ENCODE measurements at regions of chr18 and their contacts with region 1.

Region 1: GRCh38 chr18:74495581-74496507 is at the start of gene CNDP2:
- DNase-seq: peak; percentile 96 to 97 (median 96)
- H3K4me3 ChIP-seq: peak within 1 kb of the TSS; percentile 61 to 82
- H3K4me3 Mint-ChIP-seq: peak within 1 kb of the TSS; percentile 94 to 99 (median 96)
- H3K27ac ChIP-seq: peak within 1 kb of the TSS; percentile 92
- H3K27ac Mint-ChIP-seq: peak within 1 kb of the TSS; percentile 90 to 99 (median 99)
- H3K4me1 ChIP-seq: peaks cover 37% of the 10 kb centered on the region
- H3K4me1 Mint-ChIP-seq: peaks cover 31 to 58% (median 41%) of the 10 kb centered on the region in 4 donors
- H3K27me3 ChIP-seq: no peaks in the 10 kb centered on the region
- H3K27me3 Mint-ChIP-seq: no peaks in the 10 kb centered on the region
- total RNA-seq, gene CNDP2: 145 to 153 TPM

Region 2: DNA sequence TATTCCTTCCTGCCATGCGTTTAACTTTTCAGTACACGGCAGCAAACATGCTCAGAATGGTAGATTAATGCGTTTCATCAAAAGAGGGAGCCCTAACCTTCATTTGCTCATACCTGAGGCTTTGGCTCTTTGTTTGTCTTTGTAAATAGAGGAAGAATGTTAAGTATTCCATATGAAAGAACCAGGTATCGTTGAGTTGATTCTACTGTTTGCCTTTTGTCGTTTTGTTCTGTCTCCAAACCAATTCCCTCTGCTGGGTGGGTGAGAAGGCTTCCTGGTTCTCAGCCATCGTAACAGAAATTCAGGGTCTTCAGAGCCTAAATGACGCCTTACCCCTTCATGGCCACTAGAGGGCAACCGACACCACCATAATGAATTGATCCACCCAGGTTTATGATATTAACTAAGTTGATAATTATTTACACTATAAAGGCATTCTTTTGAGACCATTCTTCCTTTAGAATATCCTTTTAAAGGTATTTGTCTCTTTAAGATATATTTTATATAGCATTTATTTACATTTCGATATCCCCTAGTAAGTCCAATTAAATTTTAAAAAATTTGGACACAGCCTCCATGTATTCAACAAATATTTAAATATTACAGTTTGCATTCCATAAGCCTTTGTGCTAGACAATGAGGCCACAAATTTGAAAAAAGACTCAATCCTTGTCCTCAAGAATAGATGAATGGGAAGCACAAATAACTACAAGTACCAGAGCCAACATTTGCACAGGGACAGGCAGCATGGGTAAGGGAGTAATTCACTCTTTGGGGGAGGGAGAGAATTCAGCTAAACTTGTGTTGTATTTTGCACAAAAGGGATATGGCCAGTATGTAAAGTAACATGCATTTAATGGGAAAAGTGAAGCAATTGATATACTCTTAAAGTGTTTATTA is 299.4 kb before region 1 on chr18:
- CTCF ChIA-PET with region 1: interaction called, 46 read pairs
- POLR2A ChIA-PET with region 1: no interaction called
- intact Hi-C with region 1: loop called (anchors 1 kb)
- DNase-seq: peak; percentile 57 to 78 (median 72)
- H3K4me3 ChIP-seq: no peak overlapping the region
- H3K4me3 Mint-ChIP-seq: peak overlapping the region; percentile 71 to 90 (median 81)
- H3K27ac ChIP-seq: no peak overlapping the region
- H3K27ac Mint-ChIP-seq: peak overlapping the region in 6 of 7 donors; percentile 23 to 79 (median 65)
- H3K4me1 ChIP-seq: peaks cover 5% of the 10 kb centered on the region
- H3K4me1 Mint-ChIP-seq: peaks cover 0 to 4% (median 0%) of the 10 kb centered on the region in 4 donors
- H3K27me3 ChIP-seq: no peaks in the 10 kb centered on the region
- H3K27me3 Mint-ChIP-seq: peaks cover 2 to 14% of the 10 kb centered on the region in 2 donors

Region 3: GRCh38 chr18:74342416-74343043 is 153.3 kb before region 1 on chr18:
- CTCF ChIA-PET with region 1: interaction called, 422 read pairs
- POLR2A ChIA-PET with region 1: no interaction called
- intact Hi-C with region 1: no loop called
- DNase-seq: peak; percentile 25 to 47 (median 42)
- H3K4me3 ChIP-seq: no peak overlapping the region
- H3K4me3 Mint-ChIP-seq: no peak overlapping the region
- H3K27ac ChIP-seq: no peak overlapping the region
- H3K27ac Mint-ChIP-seq: no peak overlapping the region
- H3K4me1 ChIP-seq: no peaks in the 10 kb centered on the region
- H3K4me1 Mint-ChIP-seq: no peaks in the 10 kb centered on the region
- H3K27me3 ChIP-seq: no peaks in the 10 kb centered on the region
- H3K27me3 Mint-ChIP-seq: peaks cover 3 to 4% of the 10 kb centered on the region in 2 donors

Region 4: DNA sequence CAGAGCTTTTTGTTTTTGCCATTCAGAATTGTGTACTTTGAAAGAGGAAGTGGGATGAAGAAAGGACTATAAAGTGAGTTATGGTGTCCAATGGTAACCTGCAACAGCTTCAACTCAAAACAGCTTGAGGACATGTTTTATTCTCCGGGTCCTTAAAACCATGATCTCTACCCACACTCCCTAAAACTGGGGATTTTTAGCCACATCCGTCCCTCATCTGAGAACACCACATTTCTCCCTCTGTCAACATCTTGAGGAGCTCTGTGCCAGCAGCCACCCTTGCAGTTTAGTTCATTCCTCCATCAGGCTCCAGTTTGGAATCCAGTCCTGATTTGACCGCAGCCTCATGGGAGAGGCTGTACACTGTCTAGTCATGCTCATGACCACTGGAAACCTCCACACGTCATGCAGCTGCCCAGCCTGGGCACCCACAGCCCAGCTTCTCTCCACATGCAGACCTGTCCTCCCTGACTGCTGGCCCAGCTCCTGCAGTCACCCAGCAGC is 117.6 kb before region 1 on chr18:
- CTCF ChIA-PET with region 1: interaction called, 124 read pairs
- POLR2A ChIA-PET with region 1: interaction called, 32 read pairs
- intact Hi-C with region 1: loop called (anchors 1 kb)
- DNase-seq: peak; percentile 59 to 70 (median 63)
- H3K4me3 ChIP-seq: no peak overlapping the region
- H3K4me3 Mint-ChIP-seq: peak overlapping the region in 7 of 8 donors; percentile 40 to 69 (median 61)
- H3K27ac ChIP-seq: no peak overlapping the region
- H3K27ac Mint-ChIP-seq: peak overlapping the region; percentile 49 to 95 (median 84)
- H3K4me1 ChIP-seq: peaks cover 50% of the 10 kb centered on the region
- H3K4me1 Mint-ChIP-seq: peaks cover 33 to 59% (median 45%) of the 10 kb centered on the region in 4 donors
- H3K27me3 ChIP-seq: no peaks in the 10 kb centered on the region
- H3K27me3 Mint-ChIP-seq: no peaks in the 10 kb centered on the region

Region 5: DNA sequence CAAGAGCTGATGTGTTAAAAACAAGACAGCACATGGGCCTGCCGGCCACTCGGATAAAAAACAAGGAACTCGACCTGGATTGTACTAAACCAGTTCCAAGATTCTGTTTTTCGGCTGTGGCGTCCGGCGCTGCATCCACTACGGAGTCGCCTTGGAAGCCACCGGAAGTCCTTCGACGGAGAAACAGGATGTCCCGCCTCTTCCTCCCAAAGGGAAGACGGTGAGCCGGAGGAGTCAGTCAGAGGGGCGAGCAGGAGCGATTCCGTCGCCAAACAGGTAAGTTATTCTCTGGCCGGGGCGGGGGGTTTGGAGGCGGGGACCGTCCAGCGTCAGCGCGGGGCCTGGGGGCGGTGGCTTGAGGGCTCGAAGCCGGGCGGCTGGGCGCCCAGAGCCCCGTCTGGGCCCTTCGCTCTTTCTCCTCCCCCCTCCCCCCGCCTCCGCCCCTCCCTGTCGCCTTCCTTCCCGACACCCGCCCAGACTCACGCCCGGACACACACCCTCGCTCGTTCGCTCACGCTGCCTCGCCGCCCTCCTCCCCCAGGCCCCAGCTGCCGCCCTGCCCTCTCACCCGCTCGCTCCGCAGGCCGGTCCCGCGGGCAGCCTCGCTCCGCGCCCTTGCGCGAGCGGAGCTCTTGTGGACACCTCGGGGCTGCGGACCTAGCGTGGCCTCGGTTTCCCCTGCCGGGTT is 102.0 kb after region 1 on chr18 and contains the start of gene ZNF407:
- CTCF ChIA-PET with region 1: interaction called, 3 read pairs
- POLR2A ChIA-PET with region 1: interaction called, 35 read pairs
- intact Hi-C with region 1: loop called (anchors 1 kb)
- DNase-seq: peak; percentile 89 to 94 (median 92)
- H3K4me3 ChIP-seq: peak within 1 kb of the TSS; percentile 98 to 99
- H3K4me3 Mint-ChIP-seq: peak within 1 kb of the TSS; percentile 94 to 99 (median 96)
- H3K27ac ChIP-seq: peak within 1 kb of the TSS; percentile 93
- H3K27ac Mint-ChIP-seq: peak within 1 kb of the TSS; percentile 98 to 99 (median 99)
- H3K4me1 ChIP-seq: peaks cover 42% of the 10 kb centered on the region
- H3K4me1 Mint-ChIP-seq: peaks cover 35 to 71% (median 46%) of the 10 kb centered on the region in 4 donors
- H3K27me3 ChIP-seq: no peaks in the 10 kb centered on the region
- H3K27me3 Mint-ChIP-seq: no peaks in the 10 kb centered on the region
- total RNA-seq, gene ZNF407: 25.8 to 26.9 TPM

Region 6: DNA sequence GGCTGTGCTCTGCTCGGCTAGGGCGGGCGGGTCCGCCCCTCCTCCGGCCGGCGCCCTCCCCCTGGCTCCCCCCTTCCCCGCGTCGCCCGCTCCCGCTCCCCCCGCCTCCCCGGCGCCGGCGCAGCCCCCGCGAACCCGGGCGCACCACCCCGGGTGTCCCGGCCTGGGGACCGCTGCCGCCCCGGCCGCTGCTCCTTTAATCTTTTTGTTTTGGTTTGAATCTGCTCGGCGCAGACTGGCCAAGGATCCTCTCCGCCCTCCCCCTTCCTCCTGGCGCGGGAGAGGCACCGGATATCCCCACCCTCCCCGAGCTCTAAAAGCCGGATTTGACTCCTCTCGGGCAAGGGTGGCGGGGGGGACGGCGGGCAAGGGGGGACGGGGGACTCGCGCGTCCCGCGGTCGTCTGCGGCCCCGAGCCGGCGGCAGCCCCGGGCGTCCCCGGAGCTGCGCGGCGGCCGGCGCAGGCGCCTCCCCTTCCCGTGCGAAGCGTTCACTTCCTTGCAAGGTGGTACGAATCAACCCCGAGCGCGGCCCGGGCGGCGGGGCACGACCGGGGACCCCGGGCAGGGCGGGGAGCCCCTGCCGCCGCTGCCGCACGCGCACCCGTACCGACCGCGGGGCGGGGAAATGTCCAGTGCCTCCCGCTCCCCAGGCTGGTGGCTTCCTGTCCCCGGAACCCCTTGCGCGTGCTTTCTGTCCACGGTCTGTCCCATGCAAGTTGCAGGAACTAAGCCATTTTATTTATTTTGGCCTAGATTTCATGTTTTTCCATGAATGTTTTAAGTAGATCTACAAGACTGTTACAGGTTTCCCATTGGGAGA is 713.5 kb after region 1 on chr18 and contains the start of gene PTGR3:
- CTCF ChIA-PET with region 1: no interaction called
- POLR2A ChIA-PET with region 1: interaction called, 5 read pairs
- intact Hi-C with region 1: loop called (anchors 2 kb)
- DNase-seq: peak; percentile 78 to 89 (median 80)
- H3K4me3 ChIP-seq: peak within 1 kb of the TSS; percentile 91 to 96
- H3K4me3 Mint-ChIP-seq: peak within 1 kb of the TSS; percentile 96 to 100 (median 100)
- H3K27ac ChIP-seq: peak within 1 kb of the TSS; percentile 80
- H3K27ac Mint-ChIP-seq: peak within 1 kb of the TSS; percentile 93 to 99 (median 97)
- H3K4me1 ChIP-seq: peaks cover 62% of the 10 kb centered on the region
- H3K4me1 Mint-ChIP-seq: peaks cover 46 to 73% (median 56%) of the 10 kb centered on the region in 4 donors
- H3K27me3 ChIP-seq: no peaks in the 10 kb centered on the region
- H3K27me3 Mint-ChIP-seq: peaks cover 0 to 2% of the 10 kb centered on the region in 2 donors
- total RNA-seq, gene PTGR3: 55.9 to 56.7 TPM

Region 7: GRCh38 chr18:75350512-75350839 is 854.6 kb after region 1 on chr18:
- CTCF ChIA-PET with region 1: no interaction called
- POLR2A ChIA-PET with region 1: no interaction called
- intact Hi-C with region 1: no loop called
- DNase-seq: no peak
- H3K4me3 ChIP-seq: no peak overlapping the region
- H3K4me3 Mint-ChIP-seq: no peak overlapping the region
- H3K27ac ChIP-seq: no peak overlapping the region
- H3K27ac Mint-ChIP-seq: peak overlapping the region in 1 of 7 donors; percentile 65
- H3K4me1 ChIP-seq: no peaks in the 10 kb centered on the region
- H3K4me1 Mint-ChIP-seq: no peaks in the 10 kb centered on the region
- H3K27me3 ChIP-seq: no peaks in the 10 kb centered on the region
- H3K27me3 Mint-ChIP-seq: peaks cover 4 to 12% of the 10 kb centered on the region in 2 donors

Measured in CD4-positive, alpha-beta memory T cell (primary cell).